ENCODE measurements at regions of chr1 and their contacts with region 1.

Region 1: GRCh38 chr1:28648474-28649198 is at the start of gene RNU11:
- DNase-seq: peak; percentile 93
- ATAC-seq: peak; percentile 83
- H3K4me3 Mint-ChIP-seq: peak within 1 kb of the TSS; percentile 83
- H3K27ac Mint-ChIP-seq: peak within 1 kb of the TSS; percentile 100
- H3K4me1 Mint-ChIP-seq: peaks cover 34% of the 10 kb centered on the region
- H3K27me3 Mint-ChIP-seq: no peaks in the 10 kb centered on the region
- total RNA-seq, gene RNU11: not detected

Region 2: GRCh38 chr1:28259307-28260167 is 389.1 kb before region 1 on chr1 and contains the start of gene SESN2:
- CTCF ChIA-PET with region 1: no interaction called
- POLR2A ChIA-PET with region 1: interaction called, 9 read pairs
- intact Hi-C with region 1: loop called in 1 of 2 experiments (anchors 1 kb)
- DNase-seq: peak; percentile 100
- ATAC-seq: peak; percentile 93
- H3K4me3 Mint-ChIP-seq: peak within 1 kb of the TSS; percentile 81
- H3K27ac Mint-ChIP-seq: peak within 1 kb of the TSS; percentile 99
- H3K4me1 Mint-ChIP-seq: peaks cover 42% of the 10 kb centered on the region
- H3K27me3 Mint-ChIP-seq: no peaks in the 10 kb centered on the region
- total RNA-seq, gene SESN2: 32.9 to 33.3 TPM

Region 3: GRCh38 chr1:28505406-28506187 is 143.0 kb before region 1 on chr1 and contains the start of gene RCC1:
- CTCF ChIA-PET with region 1: interaction called, 3 read pairs
- POLR2A ChIA-PET with region 1: interaction called, 13 read pairs
- intact Hi-C with region 1: loop called (anchors 1 kb)
- DNase-seq: peak; percentile 97
- ATAC-seq: peak; percentile 85
- H3K4me3 Mint-ChIP-seq: peak within 1 kb of the TSS; percentile 98
- H3K27ac Mint-ChIP-seq: peak within 1 kb of the TSS; percentile 99
- H3K4me1 Mint-ChIP-seq: peaks cover 26% of the 10 kb centered on the region
- H3K27me3 Mint-ChIP-seq: peaks cover 1% of the 10 kb centered on the region
- total RNA-seq, gene RCC1: 103 to 107 TPM

Region 4: DNA sequence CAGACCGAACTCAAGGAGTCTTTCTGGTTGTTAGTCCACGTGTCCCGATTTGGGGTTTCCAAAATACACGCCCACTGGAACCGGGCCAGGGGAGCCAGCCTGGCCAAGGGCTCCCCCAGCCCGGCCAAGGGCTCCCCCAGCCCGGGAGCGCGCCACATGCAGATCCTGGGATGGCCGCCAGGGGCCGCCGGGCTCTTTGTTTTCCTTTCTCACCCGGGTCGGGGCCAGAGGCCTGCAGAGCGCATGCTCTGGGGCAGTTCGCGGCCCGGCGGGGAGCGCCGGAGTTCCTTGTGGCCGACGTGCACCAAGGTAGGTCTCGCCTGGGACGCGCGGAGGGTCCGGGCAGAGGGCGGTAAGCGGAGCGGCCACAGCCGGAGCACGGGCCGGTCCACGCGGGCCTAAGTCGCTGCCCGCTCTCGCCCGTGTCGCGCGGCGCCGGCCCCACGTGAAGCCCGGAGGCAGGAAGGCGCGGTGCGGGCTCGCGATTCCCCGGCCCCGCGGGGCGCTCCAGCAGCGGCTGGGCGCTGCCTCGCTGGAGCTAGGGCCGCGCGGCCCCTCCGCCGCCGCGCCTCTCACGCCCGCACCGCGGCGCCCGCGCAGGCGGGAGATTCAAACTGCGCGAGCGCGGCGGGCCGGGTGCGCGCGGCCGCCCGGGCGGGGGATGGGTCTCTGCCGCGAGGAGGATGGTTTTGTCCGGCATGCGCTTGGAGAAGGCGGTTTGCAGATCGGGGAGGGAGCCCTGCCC is 130.5 kb before region 1 on chr1:
- CTCF ChIA-PET with region 1: no interaction called
- POLR2A ChIA-PET with region 1: interaction called, 22 read pairs
- intact Hi-C with region 1: loop called (anchors 1 to 2 kb)
- DNase-seq: peak; percentile 95
- ATAC-seq: peak; percentile 66
- H3K4me3 Mint-ChIP-seq: peak overlapping the region; percentile 77
- H3K27ac Mint-ChIP-seq: peak overlapping the region; percentile 83
- H3K4me1 Mint-ChIP-seq: peaks cover 34% of the 10 kb centered on the region
- H3K27me3 Mint-ChIP-seq: no peaks in the 10 kb centered on the region

Region 5: GRCh38 chr1:28631713-28632112 is 16.9 kb before region 1 on chr1:
- CTCF ChIA-PET with region 1: no interaction called
- POLR2A ChIA-PET with region 1: interaction called, 10 read pairs
- intact Hi-C with region 1: no loop called
- DNase-seq: no peak
- ATAC-seq: peak; percentile 51
- H3K4me3 Mint-ChIP-seq: no peak overlapping the region
- H3K27ac Mint-ChIP-seq: peak overlapping the region; percentile 47
- H3K4me1 Mint-ChIP-seq: peaks cover 13% of the 10 kb centered on the region
- H3K27me3 Mint-ChIP-seq: no peaks in the 10 kb centered on the region